ENCODE measurements at regions of chr3 and their contacts with region 1.

Region 1: GRCh38 chr3:51682079-51682478 is 11.0 kb downstream of the TEX264 start:
- H3K4me3 Mint-ChIP-seq: no peak overlapping the region
- H3K27ac Mint-ChIP-seq: peak overlapping the region; percentile 16
- H3K4me1 Mint-ChIP-seq: peaks cover 93% of the 10 kb centered on the region
- H3K27me3 Mint-ChIP-seq: no peaks in the 10 kb centered on the region

Region 2: DNA sequence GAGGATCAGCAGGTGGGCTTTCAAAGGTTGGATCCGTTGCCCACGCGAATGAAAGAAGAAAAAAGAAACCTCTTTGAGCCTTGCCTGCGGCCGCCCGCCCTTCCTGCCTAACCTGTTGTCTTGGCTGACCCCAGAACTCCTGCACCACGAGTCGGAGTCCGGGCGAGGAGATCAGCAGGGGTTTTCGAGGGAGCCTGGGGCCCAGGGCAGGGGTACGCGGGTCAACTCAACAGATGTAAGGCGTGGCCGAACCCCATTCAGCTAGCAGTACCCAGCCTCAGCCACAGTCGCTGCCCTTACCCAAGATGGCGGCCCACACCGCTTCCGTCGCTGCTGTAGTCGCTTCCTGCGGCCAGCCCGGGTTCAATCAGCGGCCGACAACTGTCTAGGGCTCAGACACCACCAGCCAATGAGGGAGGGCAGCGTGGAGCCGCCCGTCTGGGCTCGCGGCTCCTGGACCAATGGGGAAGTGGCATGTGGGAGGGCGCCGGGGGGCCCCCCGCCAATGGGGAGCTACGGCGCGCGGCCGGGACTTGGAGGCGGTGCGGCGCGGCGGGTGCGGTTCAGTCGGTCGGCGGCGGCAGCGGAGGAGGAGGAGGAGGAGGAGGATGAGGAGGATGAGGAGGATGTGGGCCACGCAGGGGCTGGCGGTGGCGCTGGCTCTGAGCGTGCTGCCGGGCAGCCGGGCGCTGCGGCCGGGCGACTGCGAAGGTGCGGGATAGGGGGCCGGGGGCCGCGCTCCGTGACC is 297.2 kb before region 1 on chr3 and contains the start of gene MANF:
- intact Hi-C with region 1: loop called (anchors 5 kb)
- H3K4me3 Mint-ChIP-seq: peak within 1 kb of the TSS; percentile 93
- H3K27ac Mint-ChIP-seq: peak within 1 kb of the TSS; percentile 99
- H3K4me1 Mint-ChIP-seq: peaks cover 60% of the 10 kb centered on the region
- H3K27me3 Mint-ChIP-seq: no peaks in the 10 kb centered on the region

Region 3: DNA sequence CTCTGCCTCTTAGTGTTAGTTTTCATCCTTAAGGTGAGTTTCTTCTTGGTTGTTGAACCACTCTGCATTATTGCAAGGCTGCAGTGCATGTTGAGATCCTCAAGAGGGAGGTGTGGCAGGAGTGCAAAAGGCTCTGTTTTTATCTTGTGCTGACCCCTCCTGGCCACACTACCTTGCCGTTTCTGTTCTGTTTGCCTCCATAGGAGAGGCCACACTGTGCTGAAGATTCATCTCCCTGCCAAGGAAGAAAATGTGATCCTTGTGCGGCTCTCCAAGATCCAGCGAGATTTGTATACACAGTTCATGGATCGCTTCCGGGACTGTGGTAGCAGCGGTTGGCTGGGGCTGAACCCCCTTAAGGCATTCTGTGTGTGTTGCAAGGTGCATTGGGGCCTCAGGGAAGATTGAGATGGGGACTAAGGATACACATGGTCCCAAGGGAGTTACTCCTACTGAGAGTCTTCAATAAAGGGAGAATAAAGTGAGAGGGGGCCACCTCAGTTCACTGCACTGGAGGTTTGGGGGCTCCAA is 44.1 kb before region 1 on chr3:
- intact Hi-C with region 1: loop called (anchors 1 kb)
- H3K4me3 Mint-ChIP-seq: no peak overlapping the region
- H3K27ac Mint-ChIP-seq: no peak overlapping the region
- H3K4me1 Mint-ChIP-seq: no peaks in the 10 kb centered on the region
- H3K27me3 Mint-ChIP-seq: no peaks in the 10 kb centered on the region

Region 4: DNA sequence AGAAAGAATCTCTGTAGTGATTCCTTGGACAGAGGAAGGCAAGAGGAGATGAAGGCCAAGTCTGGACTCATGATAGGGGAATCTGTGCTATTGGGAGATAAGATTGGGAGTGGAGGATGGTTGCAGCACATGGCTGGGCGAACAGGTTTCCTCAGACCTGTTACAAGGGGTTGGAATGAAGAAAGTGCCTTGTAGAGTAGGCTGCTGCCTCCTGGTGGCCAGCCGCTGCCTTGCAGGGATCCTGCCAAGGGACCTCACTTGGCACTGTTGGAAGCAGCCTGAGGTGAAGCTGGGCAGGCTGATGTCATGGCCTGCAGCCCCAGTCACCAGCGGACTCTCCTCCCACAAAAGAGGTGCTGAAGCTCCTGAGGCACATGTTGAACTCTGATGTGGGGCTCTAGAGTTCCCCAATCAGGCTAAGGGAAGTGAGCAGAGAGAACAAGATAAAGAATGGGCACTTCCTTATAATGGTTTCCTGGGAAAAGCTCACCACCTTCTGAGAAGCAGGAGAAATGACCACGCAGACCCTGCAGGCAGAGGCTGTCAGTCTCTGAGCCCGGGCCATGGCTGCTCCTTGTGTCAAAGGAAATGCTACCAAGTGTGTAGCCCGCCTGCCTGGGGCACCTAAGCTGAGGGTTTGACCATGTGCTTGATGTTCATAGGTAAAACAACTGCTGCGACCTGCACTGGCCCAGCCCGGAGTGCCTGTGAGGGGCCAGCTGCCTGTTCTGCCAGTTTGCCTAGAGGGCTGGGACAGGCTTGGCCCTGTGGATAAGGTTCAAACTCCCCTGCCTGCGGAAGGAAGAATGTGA is 12.6 kb before region 1 on chr3:
- intact Hi-C with region 1: loop called (anchors 2 kb)
- H3K4me3 Mint-ChIP-seq: peak overlapping the region; percentile 66
- H3K27ac Mint-ChIP-seq: peak overlapping the region; percentile 89
- H3K4me1 Mint-ChIP-seq: peaks cover 78% of the 10 kb centered on the region
- H3K27me3 Mint-ChIP-seq: no peaks in the 10 kb centered on the region

Measured in dendritic cell treated with granulocyte-macrophage colony-stimulating factor and Interleukin-4, amounts not matched to agents 40 ng/mL and 50 ng/mL, for 4 days (primary cell).